Lower leg skin (tissue), 4 donors: ENCODE measurements at regions of chr4 and their contacts with region 1.

Region 1: DNA sequence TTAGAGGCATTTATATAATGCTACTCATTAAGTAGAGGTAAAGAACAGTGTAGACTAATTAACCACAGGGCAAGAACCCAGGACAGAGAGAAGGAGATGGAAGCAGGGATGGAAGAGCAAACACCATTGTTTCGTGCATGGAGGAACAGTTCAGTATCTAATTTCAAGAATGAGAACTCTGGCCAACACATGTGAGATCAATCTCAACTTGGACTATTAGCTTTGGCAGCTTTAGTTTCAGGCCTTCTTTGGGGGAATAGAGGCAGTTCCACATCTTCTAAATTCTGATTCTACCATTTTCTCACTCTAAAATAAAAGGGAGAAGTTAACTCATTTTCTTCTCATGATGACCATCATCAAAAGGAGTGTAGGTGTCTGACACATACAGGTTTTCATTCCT is 207.0 kb downstream of the LDB2 start:
- DNase-seq: no peak
- H3K4me3 ChIP-seq: no peak overlapping the region
- CTCF ChIP-seq: no peak
- POLR2A ChIP-seq: no peak

Region 2: GRCh38 chr4:16661813-16662212 is 29.6 kb before region 1 on chr4:
- intact Hi-C with region 1: loop called (anchors 1 kb)
- DNase-seq: no peak
- H3K4me3 ChIP-seq: no peak overlapping the region
- CTCF ChIP-seq: no peak
- POLR2A ChIP-seq: no peak

Region 3: DNA sequence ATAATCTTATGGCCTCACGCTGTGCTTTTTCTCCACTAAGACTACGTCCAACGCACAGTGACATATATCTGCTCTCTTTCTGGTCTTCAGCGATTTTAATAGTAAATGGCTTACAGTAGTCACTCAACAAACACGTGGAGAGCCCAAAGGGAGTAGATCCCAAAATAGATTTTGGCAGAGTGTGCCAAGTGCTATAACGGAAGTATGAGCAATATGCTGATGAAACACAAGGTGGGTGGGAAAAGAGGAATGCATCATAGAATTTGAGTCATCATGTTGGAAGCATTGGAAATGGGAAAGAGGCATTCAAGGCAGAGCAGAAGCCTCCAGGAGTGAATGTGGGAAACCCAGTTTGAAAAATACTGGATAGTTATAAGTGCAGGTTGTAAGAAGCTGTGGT is 336.0 kb after region 1 on chr4:
- intact Hi-C with region 1: no loop called
- DNase-seq: no peak
- H3K4me3 ChIP-seq: no peak overlapping the region
- CTCF ChIP-seq: no peak
- POLR2A ChIP-seq: no peak